ENCODE measurements at regions of chr10 and their contacts with region 1.

Region 1: DNA sequence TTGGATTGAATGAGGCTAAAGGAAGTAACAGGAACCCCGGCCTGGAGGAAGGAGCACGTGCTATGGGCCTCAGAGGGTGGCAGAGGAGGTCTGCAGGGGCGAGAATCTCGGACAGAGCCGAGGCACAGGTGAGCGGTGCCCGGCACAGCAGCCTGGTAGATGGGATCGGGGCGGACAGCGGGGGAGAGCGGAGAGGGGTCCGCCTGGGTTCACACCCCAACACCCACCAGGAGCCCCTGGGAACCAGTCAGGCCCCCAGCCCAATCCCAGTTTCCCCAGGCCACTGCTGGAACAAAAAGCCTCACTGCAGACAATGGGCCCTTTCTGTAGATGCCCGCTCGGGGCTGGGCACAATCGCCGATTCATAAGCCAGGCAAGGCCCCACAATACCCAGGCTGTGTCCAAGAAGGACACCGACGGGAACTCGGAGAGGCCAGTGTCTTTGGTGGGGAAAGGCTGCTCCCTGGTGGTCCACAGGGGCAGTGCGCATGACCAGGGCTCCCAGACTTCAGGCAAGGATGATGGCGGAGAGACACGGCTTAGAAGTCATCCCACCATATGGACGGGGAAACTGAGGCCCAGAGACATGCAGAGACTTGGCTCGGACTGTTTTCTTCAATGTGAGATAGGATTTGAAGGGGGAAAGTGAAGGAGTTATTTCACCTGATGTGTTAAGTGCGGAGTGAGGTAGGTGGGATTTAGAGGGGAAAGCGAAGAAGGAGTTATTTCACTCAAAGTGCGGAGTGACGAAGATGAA is 106.9 kb upstream of the GPR26 start:
- DNase-seq: peak; percentile 59 to 96 (median 92)
- H3K4me3 ChIP-seq: peak overlapping the region in 10 of 59 donors; percentile 1 to 40 (median 21)
- H3K27ac ChIP-seq: peak overlapping the region in 58 of 59 donors; percentile 41 to 98 (median 92)
- H3K27me3 ChIP-seq: no peaks in the 10 kb centered on the region
- CTCF ChIP-seq: peak; percentile 72 to 100 (median 99)

Region 2: DNA sequence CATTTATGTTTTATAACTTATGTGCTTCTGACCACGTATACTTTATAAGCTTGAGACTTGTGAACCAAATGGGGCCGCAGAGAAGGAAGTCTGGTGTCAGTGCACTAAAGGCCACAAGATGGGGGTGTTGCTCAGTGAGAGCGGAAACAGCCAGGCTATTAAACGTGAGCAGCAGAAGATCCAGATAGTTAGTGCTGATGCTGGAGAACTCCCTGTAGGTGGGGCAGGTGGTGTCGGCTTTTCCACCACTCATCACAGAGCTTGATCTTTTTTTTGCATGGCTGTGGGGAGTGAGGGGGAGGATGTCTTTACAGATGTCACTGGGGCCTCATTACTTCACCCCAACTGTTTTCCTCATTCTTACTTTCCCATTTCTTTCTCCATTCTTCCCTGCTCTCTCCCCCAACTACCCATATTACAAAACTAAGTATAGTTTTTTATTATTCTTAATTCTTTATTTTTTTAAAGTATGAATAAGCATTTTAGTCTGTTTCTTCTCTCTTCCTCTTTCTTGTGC is 515.8 kb before region 1 on chr10:
- intact Hi-C with region 1: loop called (anchors 1 to 5 kb)
- DNase-seq: peak; percentile 10 to 78 (median 64)
- H3K4me3 ChIP-seq: no peak overlapping the region
- H3K27ac ChIP-seq: peak overlapping the region in 23 of 59 donors; percentile 3 to 75 (median 34)
- H3K27me3 ChIP-seq: no peaks in the 10 kb centered on the region
- CTCF ChIP-seq: peak; percentile 49 to 92 (median 80)

Region 3: GRCh38 chr10:123147635-123148413 is 411.4 kb before region 1 on chr10 and contains the start of gene HMX2:
- intact Hi-C with region 1: loop called (anchors 5 kb)
- DNase-seq: no peak
- H3K4me3 ChIP-seq: no peak within 1 kb of the TSS
- H3K27ac ChIP-seq: no peak within 1 kb of the TSS
- H3K27me3 ChIP-seq: peaks cover 39 to 100% (median 98%) of the 10 kb centered on the region in 45 donors
- CTCF ChIP-seq: no peak
- total RNA-seq, gene HMX2: not detected

Region 4: DNA sequence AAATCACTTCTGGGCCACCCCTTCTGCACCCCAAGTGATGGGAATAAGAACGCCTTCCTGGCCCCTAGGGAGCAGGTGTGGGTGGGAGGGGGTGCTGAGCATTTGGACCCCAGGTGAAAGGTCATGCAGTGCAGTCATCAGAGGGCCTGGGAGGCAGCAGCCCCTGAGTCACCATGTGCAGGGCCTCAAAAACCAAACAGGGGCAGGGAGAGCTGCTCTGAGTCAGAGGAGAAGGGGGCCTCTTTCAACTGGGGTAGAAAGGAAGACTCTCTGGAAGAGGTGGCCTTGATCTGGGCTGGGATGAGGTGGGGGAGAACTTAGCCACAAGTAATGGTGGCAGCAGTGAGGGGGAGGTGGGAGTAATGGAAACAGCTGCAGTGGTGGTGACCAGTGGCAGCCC is 240.7 kb before region 1 on chr10:
- intact Hi-C with region 1: loop called in 1 of 2 experiments (anchors 5 kb)
- DNase-seq: no peak
- H3K4me3 ChIP-seq: no peak overlapping the region
- H3K27ac ChIP-seq: no peak overlapping the region
- H3K27me3 ChIP-seq: no peaks in the 10 kb centered on the region
- CTCF ChIP-seq: no peak

Region 5: DNA sequence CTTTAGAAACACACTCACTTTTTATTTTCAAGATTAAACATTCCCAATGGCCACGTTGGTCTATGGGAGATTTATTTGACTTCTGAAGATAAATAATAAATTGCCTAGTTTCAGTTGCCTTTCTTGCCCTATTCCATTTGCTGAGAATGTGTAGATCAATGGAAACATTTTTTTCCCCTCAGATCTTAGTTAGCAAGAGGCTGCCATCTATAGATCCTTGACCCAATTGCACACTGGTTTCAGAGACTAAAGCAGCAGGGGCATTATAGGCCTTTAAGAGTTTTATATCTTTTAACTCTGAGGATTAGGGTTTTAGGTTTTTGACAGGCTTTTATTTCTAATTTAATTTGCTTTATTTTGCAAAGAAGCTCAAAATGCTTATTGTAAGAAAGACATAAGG is 56.3 kb before region 1 on chr10:
- intact Hi-C with region 1: loop called in 1 of 2 experiments (anchors 5 kb)
- DNase-seq: no peak
- H3K4me3 ChIP-seq: no peak overlapping the region
- H3K27ac ChIP-seq: peak overlapping the region in 14 of 59 donors; percentile 12 to 55 (median 33)
- H3K27me3 ChIP-seq: no peaks in the 10 kb centered on the region
- CTCF ChIP-seq: peak in 4 of 56 donors; percentile 13 to 26 (median 19)

Region 6: DNA sequence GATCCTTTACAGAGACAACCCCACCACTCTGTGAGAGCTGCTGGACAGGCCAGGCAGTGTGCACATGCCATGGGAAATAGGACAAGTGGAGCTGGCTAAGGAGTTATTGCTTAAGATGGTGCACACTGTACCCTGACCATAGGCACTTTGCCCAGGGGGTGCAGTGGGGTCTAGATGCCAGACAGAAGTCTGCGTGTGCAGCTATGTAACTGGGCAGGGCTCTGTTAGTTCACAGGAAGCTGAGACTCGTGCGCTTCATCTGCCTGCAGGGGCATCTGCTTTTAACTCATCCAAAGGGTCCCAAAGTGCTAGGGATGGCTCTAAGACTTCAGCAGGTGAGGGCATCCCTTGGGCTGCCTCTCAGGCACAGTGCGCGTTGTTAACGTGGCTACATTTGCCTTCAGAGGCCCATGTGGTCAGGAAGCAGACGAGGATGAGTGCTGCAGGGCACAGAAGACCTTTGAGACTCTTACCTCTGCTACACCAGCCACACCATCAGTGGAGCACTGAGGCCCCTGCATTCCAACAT is 29.2 kb after region 1 on chr10:
- intact Hi-C with region 1: no loop called
- DNase-seq: no peak
- H3K4me3 ChIP-seq: no peak overlapping the region
- H3K27ac ChIP-seq: no peak overlapping the region
- H3K27me3 ChIP-seq: peaks cover 0 to 21% (median 0%) of the 10 kb centered on the region in 45 donors
- CTCF ChIP-seq: no peak